Calu3 (cell line): ENCODE measurements at regions of chr7 and their contacts with region 1.

Region 1: DNA sequence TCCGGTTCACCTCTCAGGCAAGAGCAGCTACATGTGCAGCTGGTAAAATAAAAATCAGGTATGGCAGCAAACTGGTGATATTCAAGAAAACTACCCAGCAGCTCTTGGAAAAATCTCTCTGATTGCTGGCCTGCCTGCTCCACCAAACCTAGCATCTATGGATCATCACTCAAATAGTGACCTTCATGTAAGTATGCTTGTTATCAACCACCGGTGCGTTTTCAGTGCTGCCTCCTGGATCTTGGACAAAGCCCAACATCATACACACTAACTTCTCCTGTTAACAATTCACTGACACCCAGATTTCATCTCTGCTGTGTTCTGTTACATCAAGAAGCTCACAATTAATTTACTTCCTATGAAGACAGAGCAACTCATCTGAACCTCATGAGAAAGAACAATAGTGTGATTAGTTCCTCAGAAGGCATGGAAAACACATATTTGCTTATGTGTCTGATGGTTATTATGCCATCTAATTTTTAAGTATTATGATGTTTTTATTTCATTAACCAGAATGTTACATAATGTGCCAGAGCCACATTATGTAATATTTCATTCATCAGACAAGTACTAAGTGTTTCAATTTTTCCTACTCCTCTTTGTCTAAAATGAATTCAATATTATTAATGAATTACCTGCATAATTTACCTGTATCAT is 8.8 kb downstream of the CDK6 start:
- DNase-seq: no peak
- H3K4me3 Mint-ChIP-seq: peak overlapping the region; percentile 64
- H3K27ac Mint-ChIP-seq: peak overlapping the region; percentile 31
- H3K4me1 Mint-ChIP-seq: peaks cover 35% of the 10 kb centered on the region
- H3K27me3 Mint-ChIP-seq: no peaks in the 10 kb centered on the region
- CTCF ChIP-seq: no peak

Region 2: DNA sequence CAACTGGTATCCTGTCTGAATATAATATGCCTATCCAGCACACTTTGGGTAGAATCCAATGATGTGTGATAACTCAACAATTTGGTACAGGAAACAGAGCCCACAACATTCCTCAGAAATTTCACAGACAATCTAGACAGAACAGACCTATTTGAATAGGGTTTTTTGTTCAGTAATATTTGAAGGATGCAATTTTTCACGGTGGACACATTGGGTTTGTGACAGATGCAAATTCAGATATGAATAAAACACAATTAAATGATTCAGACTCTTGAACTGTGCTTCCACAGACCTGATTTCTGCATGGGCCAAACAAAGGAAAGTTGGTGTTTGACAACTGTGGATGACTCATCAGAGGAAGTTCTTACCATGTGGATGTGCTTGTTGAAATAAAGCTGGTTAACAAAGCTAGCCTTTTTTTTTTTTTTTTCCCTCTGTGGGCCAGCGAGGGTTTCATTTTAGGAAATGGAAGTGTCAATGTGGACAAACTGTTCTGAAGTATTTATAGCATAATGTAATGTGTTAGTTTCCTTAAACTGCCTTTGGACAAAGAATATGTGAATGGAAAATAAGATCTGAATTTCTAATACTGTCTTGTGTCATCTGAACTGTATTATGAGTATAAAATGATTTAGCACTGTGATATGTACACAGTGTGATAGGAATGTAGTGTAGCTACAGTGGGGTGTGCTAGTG is 194.2 kb before region 1 on chr7:
- CTCF ChIA-PET with region 1: no interaction called
- intact Hi-C with region 1: loop called (anchors 5 kb)
- DNase-seq: peak; percentile 40
- H3K4me3 Mint-ChIP-seq: peak overlapping the region; percentile 36
- H3K27ac Mint-ChIP-seq: peak overlapping the region; percentile 81
- H3K4me1 Mint-ChIP-seq: peaks cover 30% of the 10 kb centered on the region
- H3K27me3 Mint-ChIP-seq: no peaks in the 10 kb centered on the region
- CTCF ChIP-seq: no peak

Region 3: GRCh38 chr7:92691578-92691977 is 136.0 kb before region 1 on chr7:
- CTCF ChIA-PET with region 1: interaction called, 8 read pairs
- intact Hi-C with region 1: loop called (anchors 2 kb)
- DNase-seq: no peak
- H3K4me3 Mint-ChIP-seq: no peak overlapping the region
- H3K27ac Mint-ChIP-seq: no peak overlapping the region
- H3K4me1 Mint-ChIP-seq: peaks cover 28% of the 10 kb centered on the region
- H3K27me3 Mint-ChIP-seq: no peaks in the 10 kb centered on the region
- CTCF ChIP-seq: peak; percentile 17

Region 4: DNA sequence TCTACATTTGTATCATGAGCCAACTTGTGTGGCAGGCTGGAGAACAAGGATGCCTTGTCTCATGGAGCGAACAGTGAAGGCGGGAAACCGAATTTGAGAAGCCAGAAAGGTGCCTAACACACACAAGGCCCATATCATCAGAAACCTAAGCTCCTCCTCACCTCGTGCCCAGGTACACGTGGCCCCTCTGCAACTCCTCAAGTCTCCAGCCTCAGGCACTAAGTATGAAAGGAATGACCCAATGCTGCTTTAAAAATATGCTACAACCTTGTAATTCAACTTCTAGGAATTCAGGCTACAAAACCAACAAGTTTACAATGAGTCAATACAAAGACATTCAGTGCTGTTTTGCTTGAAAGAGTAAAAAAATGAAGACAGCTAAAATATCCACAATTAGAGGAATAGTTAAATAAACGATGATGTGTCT is 86.9 kb before region 1 on chr7:
- CTCF ChIA-PET with region 1: no interaction called
- intact Hi-C with region 1: loop called (anchors 10 kb)
- DNase-seq: peak; percentile 64
- H3K4me3 Mint-ChIP-seq: peak overlapping the region; percentile 40
- H3K27ac Mint-ChIP-seq: peak overlapping the region; percentile 91
- H3K4me1 Mint-ChIP-seq: peaks cover 54% of the 10 kb centered on the region
- H3K27me3 Mint-ChIP-seq: no peaks in the 10 kb centered on the region
- CTCF ChIP-seq: no peak

Region 5: GRCh38 chr7:92763636-92764423 is 63.8 kb before region 1 on chr7:
- CTCF ChIA-PET with region 1: no interaction called
- intact Hi-C with region 1: loop called (anchors 5 kb)
- DNase-seq: peak; percentile 66
- H3K4me3 Mint-ChIP-seq: no peak overlapping the region
- H3K27ac Mint-ChIP-seq: peak overlapping the region; percentile 58
- H3K4me1 Mint-ChIP-seq: peaks cover 49% of the 10 kb centered on the region
- H3K27me3 Mint-ChIP-seq: no peaks in the 10 kb centered on the region
- CTCF ChIP-seq: no peak

Region 6: GRCh38 chr7:94620703-94621118 is 1793.1 kb after region 1 on chr7:
- CTCF ChIA-PET with region 1: no interaction called
- intact Hi-C with region 1: no loop called
- DNase-seq: peak; percentile 75
- H3K4me3 Mint-ChIP-seq: no peak overlapping the region
- H3K27ac Mint-ChIP-seq: no peak overlapping the region
- H3K4me1 Mint-ChIP-seq: peaks cover 11% of the 10 kb centered on the region
- H3K27me3 Mint-ChIP-seq: no peaks in the 10 kb centered on the region
- CTCF ChIP-seq: no peak